Vagina (tissue), 2 donors: ENCODE measurements at regions of chr3 and their contacts with region 1.

Region 1: GRCh38 chr3:196568246-196569002 is at the starts of genes FBXO45 and WDR53:
- DNase-seq: peak in 1 of 2 donors; percentile 89
- H3K4me3 ChIP-seq: peak within 1 kb of the TSS; percentile 85 to 91
- H3K27ac ChIP-seq: peak within 1 kb of the TSS; percentile 89
- H3K4me1 ChIP-seq: peaks cover 30% of the 10 kb centered on the region
- H3K27me3 ChIP-seq: no peaks in the 10 kb centered on the region
- CTCF ChIP-seq: no peak
- POLR2A ChIP-seq: peak in 1 of 2 donors; percentile 48
- total RNA-seq, gene FBXO45: 6.6 TPM
- total RNA-seq, gene WDR53: 13.5 TPM

Region 2: DNA sequence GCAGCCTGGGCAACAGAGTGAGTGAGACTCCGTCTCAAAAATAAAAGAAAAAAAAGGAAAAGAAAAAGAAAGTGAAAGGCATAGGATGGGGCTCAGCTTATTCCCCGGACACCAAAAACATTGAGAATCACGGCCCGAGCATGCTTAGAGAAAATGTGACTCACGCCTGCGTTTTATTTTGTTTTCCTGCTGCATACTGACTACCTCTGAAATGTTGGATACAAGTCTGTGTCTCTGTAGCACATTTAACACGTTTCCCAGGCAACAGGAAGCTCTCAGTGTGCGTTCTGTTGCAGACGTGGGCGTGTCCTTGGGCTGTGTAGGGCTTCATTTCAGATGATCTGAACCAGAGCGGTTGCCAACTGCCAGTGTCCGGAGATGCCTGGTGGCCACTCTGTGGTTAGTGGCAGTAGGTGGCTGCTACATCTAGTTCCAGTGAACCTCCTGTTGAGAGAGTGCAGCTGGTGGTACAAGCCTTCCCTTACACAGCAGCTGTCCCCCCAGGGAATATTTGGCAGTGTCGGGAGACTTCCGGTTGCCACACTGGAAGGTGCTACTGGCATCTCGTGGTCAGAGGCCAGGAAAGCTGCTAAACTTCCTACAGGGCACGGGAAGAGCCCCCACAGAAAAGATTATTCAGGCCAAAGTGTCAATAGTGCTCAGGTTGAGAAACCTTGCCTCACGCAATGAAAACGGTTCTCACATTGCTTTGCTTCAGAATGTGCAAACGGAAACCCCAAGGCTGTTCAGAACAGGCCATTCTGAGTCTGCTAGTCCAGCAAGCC is 349.0 kb before region 1 on chr3:
- intact Hi-C with region 1: no loop called
- DNase-seq: no peak
- H3K4me3 ChIP-seq: peak overlapping the region; percentile 12 to 25
- H3K27ac ChIP-seq: no peak overlapping the region
- H3K4me1 ChIP-seq: no peaks in the 10 kb centered on the region
- H3K27me3 ChIP-seq: no peaks in the 10 kb centered on the region
- CTCF ChIP-seq: no peak
- POLR2A ChIP-seq: no peak

Region 3: DNA sequence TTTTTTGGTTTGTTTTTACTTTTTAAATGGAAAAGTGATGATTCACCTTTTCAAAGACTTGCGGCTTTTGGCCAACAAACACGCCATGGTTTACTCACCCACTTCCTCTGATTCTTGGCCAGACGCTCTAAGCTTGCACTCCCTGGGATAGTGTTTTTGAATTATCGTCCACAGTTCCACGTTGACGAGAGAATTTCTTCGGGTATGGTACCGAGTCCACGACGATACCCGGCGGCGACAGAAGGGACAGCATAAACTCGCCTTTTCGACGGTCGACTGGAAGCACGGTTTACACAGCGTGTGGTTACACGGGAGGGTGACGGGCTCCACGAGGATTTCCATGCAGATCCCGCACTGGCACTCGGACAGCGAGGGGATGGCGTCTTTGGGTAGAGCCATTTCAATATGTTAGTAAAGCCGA is 65.6 kb before region 1 on chr3:
- intact Hi-C with region 1: loop called (anchors 5 kb)
- DNase-seq: no peak
- H3K4me3 ChIP-seq: peak overlapping the region; percentile 73 to 79
- H3K27ac ChIP-seq: peak overlapping the region; percentile 92
- H3K4me1 ChIP-seq: peaks cover 47% of the 10 kb centered on the region
- H3K27me3 ChIP-seq: no peaks in the 10 kb centered on the region
- CTCF ChIP-seq: no peak
- POLR2A ChIP-seq: no peak

Region 4: GRCh38 chr3:196650740-196651311 is 82.4 kb after region 1 on chr3:
- intact Hi-C with region 1: no loop called
- DNase-seq: no peak
- H3K4me3 ChIP-seq: no peak overlapping the region
- H3K27ac ChIP-seq: peak overlapping the region; percentile 33
- H3K4me1 ChIP-seq: peaks cover 12% of the 10 kb centered on the region
- H3K27me3 ChIP-seq: no peaks in the 10 kb centered on the region
- CTCF ChIP-seq: no peak
- POLR2A ChIP-seq: no peak